IMR-90 (cell line): ENCODE measurements at regions of chr6 and their contacts with region 1.

Region 1: DNA sequence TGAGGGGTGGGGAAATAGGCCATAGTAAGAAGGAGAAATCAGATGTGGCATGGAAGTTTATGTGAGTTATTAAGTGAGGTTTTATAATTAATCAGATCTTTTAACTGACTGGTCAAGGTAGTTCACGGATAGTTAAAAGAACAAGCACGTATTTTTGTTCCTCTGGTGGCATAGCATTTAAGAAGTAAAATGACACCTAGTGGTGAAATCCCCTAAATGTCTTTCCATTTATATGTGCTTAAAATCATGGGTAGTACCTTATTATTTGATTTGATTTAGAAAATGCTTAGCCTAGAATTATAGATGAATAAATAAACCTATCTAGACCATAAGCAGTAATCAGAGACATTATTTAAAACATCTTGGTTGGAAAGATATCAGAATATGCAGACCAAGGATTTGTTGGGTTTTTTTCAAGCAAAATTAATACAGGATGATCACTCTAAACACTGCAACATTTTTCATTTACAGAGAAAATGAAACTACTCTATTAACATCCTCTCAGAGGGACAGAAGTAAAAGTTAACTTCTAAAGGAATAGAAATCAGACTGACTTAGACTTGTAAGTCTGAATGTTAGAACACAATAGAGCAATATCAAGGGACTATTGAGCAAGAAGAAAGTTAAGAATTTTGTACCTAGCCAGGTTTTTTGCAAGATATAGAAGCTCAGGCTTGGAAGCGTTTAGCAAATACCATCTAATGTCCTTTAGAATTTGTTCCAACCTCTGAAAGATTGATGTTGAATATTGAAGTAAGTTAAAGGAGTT is 81.1 kb downstream of the STXBP5 start:
- DNase-seq: peak; percentile 65
- ATAC-seq: peak; percentile 67
- H3K4me3 ChIP-seq: no peak overlapping the region
- H3K27ac ChIP-seq: no peak overlapping the region
- H3K4me1 ChIP-seq: peaks cover 5% of the 10 kb centered on the region
- H3K27me3 ChIP-seq: no peaks in the 10 kb centered on the region
- CTCF ChIP-seq: peak; percentile 56
- POLR2A ChIP-seq: no peak
- RAD21 ChIP-seq: peak; percentile 60

Region 2: DNA sequence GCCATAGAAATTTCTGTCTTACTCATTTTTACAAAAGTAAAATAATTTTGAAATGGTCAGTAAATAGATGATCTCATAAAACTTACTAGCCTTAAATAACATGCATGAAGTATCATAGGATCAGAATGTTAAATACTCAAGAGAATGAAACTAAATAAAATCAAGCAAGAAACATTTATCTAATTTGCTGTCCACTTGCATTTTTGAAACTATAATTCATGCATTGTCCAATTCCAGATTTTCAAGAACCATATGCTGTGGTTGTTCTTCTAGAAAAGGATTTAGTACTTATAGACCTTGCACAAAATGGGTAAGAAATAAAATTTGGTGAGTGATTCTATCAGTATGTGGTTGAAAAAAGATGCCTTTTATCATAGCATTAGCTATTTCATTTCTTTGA is 25.9 kb after region 1 on chr6:
- CTCF ChIA-PET with region 1: interaction called, 11 read pairs
- POLR2A ChIA-PET with region 1: no interaction called
- dilution Hi-C with region 1: no loop called
- in situ Hi-C with region 1: no loop called
- intact Hi-C with region 1: no loop called
- DNase-seq: peak; percentile 45
- ATAC-seq: peak; percentile 40
- H3K4me3 ChIP-seq: no peak overlapping the region
- H3K27ac ChIP-seq: no peak overlapping the region
- H3K4me1 ChIP-seq: no peaks in the 10 kb centered on the region
- H3K27me3 ChIP-seq: no peaks in the 10 kb centered on the region
- CTCF ChIP-seq: no peak
- POLR2A ChIP-seq: no peak
- RAD21 ChIP-seq: no peak